Mammary epithelial cell (primary cell): ENCODE measurements at regions of chr1 and their contacts with region 1.

Region 1: GRCh38 chr1:17215545-17215890 is 10.6 kb downstream of the PADI1 start:
- DNase-seq: peak; percentile 86
- H3K4me3 ChIP-seq: no peak overlapping the region
- H3K27ac ChIP-seq: peak overlapping the region; percentile 62
- H3K4me1 ChIP-seq: peaks cover 46% of the 10 kb centered on the region
- H3K27me3 ChIP-seq: no peaks in the 10 kb centered on the region
- CTCF ChIP-seq: no peak

Region 2: DNA sequence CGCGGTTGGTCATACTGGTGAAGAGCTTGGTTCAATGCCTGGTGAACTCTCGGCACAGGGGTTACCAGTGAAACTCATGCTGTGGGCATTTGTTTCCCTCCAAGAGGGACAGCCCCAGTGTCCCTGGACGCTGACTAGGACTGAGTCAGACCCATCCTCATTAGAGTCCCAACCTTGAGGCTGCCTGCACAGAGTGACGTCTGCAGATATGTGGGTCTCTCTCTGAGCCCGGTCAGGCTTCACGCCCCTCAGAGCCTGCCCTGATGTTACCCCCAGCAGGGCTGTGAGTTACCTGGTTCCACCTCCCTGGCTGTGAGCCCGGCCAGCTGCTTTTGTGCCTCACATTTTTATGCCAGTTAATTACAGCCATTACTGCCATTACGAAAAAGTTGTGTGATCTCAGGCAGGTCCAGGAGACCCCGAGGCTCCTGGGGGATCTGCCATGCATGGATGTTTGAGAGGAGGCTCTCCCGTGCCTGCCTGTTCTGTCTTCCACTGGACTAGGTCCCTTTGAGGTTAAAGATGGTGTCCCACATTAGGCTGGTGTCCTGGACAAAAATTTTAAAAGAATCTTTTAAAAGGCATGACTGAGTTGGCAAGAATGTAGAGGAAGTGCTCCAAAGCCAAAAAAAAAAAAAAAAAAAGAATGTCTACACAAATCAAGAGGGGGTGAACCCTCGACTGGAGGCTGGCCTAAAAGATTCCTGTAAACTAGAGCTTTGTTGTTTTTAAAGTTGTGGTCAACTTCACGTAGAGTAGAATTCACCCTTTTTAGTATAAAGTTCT is 47.2 kb before region 1 on chr1:
- CTCF ChIA-PET with region 1: no interaction called
- dilution Hi-C with region 1: no loop called
- in situ Hi-C with region 1: no loop called
- intact Hi-C with region 1: loop called (anchors 5 kb)
- DNase-seq: peak; percentile 93
- H3K4me3 ChIP-seq: no peak overlapping the region
- H3K27ac ChIP-seq: peak overlapping the region; percentile 49
- H3K4me1 ChIP-seq: peaks cover 19% of the 10 kb centered on the region
- H3K27me3 ChIP-seq: no peaks in the 10 kb centered on the region
- CTCF ChIP-seq: no peak

Region 3: DNA sequence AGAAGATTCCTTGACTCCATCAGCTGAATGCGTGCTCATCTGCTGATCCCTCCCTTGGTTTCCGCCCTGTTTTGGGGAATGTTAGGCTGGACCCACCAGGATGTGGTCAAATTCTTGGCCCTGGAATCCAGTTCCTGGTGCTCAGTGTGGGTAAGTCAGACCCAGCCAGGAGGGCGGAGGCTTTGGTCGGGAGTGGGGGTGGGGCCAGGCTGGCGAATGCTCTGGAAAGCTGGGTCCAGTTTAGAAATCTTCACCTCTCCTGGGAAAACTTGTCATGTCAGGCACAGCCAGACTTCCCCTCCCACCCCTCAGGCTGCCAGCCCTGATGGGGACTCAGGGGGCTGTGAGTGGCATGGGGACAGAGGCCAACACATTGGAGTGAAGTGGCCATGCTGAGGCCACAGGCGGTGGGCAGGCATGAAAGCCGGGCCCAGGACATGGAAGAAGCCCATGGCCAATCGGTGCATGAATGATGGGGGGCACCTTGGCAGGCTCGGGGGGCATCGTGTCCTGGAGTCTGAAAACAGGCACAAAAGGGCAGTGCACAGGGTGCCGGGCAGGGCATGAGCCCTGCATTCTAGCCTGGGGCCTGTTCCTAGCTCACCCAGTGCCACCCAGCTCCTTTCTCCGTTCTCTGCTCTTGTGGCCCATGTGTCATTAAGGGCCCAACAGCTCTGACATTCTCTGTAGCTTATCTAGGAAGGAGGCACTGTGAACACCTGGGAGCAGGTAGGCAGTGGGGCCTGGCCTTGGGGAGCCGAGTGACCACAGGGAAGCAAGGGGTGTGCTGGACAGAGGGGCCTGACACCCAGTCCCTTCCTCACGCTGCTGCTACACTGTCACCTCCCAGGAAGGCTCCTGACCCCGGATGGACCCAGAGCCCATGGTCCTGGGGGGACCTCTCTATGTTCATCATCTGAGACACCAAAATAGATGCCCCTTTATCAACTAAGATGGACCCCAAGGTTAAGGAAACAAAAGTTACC is 25.2 kb before region 1 on chr1:
- CTCF ChIA-PET with region 1: no interaction called
- dilution Hi-C with region 1: no loop called
- in situ Hi-C with region 1: no loop called
- intact Hi-C with region 1: loop called (anchors 2 kb)
- DNase-seq: peak; percentile 92
- H3K4me3 ChIP-seq: no peak overlapping the region
- H3K27ac ChIP-seq: peak overlapping the region; percentile 64
- H3K4me1 ChIP-seq: peaks cover 61% of the 10 kb centered on the region
- H3K27me3 ChIP-seq: no peaks in the 10 kb centered on the region
- CTCF ChIP-seq: no peak

Region 4: DNA sequence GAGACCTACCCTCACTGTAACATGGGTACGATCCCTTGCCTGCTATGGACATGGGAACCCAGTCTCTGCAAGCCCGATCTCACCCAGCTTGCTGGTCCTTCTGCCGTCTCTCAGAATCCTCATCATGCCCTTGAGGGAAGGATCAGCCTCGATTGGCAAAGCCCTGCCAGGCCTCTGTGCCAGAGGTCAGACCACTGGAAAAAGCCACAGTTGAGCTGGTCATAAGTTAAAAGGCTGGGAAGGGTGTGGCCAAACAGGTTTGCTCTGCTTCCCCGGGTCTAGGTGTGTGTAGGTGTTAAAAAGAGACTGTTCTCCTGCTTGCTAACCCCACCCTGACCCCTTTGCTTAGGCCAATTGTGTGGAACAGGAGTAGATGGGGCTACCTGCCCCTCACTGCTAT is 13.9 kb after region 1 on chr1:
- CTCF ChIA-PET with region 1: no interaction called
- dilution Hi-C with region 1: no loop called
- in situ Hi-C with region 1: no loop called
- intact Hi-C with region 1: loop called (anchors 1 kb)
- DNase-seq: peak; percentile 56
- H3K4me3 ChIP-seq: no peak overlapping the region
- H3K27ac ChIP-seq: no peak overlapping the region
- H3K4me1 ChIP-seq: peaks cover 45% of the 10 kb centered on the region
- H3K27me3 ChIP-seq: no peaks in the 10 kb centered on the region
- CTCF ChIP-seq: no peak